Panc1 (cell line): ENCODE measurements at regions of chr7 and their contacts with region 1.

Region 1: DNA sequence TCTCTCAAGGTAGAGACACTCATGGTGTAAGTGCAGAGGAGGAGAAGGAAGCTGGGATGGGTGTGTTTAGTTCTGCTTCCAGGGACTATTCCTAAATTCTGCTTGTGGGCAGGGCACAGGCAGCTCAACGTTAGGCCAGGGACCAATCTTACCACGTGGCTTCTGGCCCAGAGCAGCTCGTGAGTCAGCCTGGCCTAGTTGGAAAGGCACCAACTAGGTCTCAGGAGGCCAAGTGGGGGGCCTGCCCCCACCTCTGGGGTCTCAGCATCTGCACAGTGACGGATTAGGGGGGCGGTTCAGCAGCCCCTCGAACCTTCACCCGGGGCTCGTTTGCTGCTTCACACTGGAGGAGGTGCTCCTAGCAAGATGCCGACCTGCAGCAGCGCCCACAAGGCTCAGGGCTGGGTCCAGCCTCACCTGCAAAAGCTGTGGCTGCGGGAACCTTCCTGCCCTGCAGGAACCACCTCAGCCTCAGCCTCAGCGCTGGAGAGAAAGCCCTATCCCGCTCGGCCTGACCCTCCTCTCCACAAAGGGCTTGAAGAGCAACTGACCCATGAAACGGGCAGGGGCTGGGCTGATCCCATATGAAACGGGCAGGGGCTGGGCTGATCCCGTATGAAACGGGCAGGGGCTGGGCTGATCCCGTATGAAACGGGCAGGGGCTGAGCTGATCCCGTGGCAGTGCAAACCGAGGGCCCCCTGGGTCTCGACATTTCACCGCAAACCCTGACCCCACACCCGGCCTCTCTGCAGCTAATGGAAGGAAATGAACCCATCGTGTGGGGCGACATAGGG is 447.4 kb downstream of the DNAJB6 start:
- DNase-seq: no peak
- ATAC-seq: no peak
- H3K4me3 ChIP-seq: no peak overlapping the region
- H3K27ac ChIP-seq: no peak overlapping the region
- H3K4me1 ChIP-seq: no peaks in the 10 kb centered on the region; the same call in 1 of the 2 replicates
- H3K27me3 ChIP-seq: no peaks in the 10 kb centered on the region
- CTCF ChIP-seq: no peak

Region 2: GRCh38 chr7:158276414-158277218 is 492.4 kb after region 1 on chr7:
- CTCF ChIA-PET with region 1: no interaction called
- POLR2A ChIA-PET with region 1: interaction called, 10 read pairs
- in situ Hi-C with region 1: no loop called
- intact Hi-C with region 1: no loop called
- DNase-seq: no peak
- ATAC-seq: no peak
- H3K4me3 ChIP-seq: no peak overlapping the region
- H3K27ac ChIP-seq: no peak overlapping the region
- H3K4me1 ChIP-seq: no peaks in the 10 kb centered on the region
- H3K27me3 ChIP-seq: no peaks in the 10 kb centered on the region; the same call in 1 of the 2 replicates
- CTCF ChIP-seq: no peak